ENCODE measurements at regions of chrX and their contacts with region 1.

Region 1: DNA sequence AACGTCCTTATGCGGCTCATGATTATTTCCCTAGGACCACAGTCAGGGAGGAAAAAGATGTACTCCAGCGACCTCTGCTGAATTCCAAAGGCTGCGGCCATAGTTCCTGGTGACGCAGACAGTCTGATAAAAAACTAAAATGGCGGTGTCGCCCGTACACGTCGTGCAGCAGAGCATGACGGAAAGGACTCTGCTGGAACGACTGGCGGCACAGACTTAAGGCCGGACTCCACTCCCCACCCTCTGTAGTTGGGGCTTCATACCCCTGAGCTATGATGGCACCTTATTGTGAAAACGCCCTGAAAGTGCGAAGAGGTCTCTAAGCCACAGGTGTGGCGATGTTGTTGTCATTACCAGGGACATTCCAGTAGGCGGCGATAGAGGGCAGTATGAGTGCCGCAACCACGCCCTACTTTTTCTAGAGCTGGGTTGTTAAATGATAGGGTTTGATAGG is 90.0 kb upstream of the EDA2R start:
- DNase-seq: peak; percentile 52
- H3K4me3 ChIP-seq: peak overlapping the region; percentile 29
- H3K27ac ChIP-seq: no peak overlapping the region
- H3K4me1 ChIP-seq: no peaks in the 10 kb centered on the region
- H3K27me3 ChIP-seq: no peaks in the 10 kb centered on the region
- CTCF ChIP-seq: peak; percentile 76

Region 2: DNA sequence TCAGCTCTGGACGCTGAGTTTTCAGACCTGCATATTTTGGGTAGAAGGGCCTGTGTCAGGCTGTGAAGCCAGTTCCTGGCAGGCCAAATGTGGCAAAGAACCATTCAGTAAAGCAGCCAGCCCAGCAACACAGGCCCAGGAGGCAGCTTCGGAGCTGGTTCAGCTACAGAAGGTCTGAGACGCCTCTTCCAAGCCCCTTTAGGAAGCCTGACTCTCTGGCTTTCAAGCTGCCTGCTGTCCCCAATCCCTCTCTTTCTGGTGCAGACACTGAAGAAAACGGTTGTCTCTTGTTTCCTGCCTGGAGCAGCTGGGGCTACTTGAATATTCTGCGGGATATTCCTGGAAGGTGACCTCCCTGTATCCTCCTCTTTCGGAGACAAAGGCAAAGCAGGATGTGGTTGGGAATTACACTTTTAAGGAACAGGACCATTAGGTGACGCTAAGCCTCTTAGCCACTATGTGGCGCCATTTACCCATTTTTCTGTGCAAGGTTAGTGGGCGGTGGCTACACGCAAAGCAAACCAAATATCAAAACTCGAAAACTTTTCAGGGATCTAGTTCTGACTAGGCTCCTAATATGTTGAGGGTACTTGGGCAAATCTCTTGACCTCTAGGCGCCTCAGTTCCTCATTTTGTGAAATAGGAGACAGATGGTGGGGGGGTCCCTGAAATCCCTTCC is 1147.0 kb before region 1 on chrX:
- CTCF ChIA-PET with region 1: interaction called, 6 read pairs
- POLR2A ChIA-PET with region 1: no interaction called
- intact Hi-C with region 1: loop called (anchors 2 kb)
- DNase-seq: peak; percentile 78
- H3K4me3 ChIP-seq: no peak overlapping the region
- H3K27ac ChIP-seq: no peak overlapping the region
- H3K4me1 ChIP-seq: no peaks in the 10 kb centered on the region
- H3K27me3 ChIP-seq: no peaks in the 10 kb centered on the region
- CTCF ChIP-seq: peak; percentile 86

Region 3: DNA sequence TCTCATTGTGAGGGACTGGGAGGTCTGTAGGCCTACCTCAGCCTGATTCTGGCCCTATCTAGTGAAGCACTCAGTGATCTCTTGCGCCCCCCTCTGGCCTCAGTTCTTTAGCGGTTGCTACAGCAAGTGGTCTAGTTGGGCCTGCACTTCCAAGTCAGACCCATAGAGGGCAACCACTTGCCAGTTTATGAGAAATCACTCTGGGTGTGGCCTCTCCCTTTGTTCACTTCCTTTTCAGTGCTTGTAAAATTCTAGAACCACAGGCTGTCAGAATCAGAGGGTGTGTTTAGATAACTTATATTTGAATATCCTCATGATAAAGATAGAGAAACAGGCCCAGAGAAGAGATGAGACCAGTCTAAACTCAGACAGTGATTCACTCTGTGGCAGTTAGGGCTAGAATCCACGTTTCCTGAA is 1133.4 kb before region 1 on chrX:
- CTCF ChIA-PET with region 1: no interaction called
- POLR2A ChIA-PET with region 1: no interaction called
- intact Hi-C with region 1: loop called (anchors 5 kb)
- DNase-seq: peak; percentile 95
- H3K4me3 ChIP-seq: no peak overlapping the region
- H3K27ac ChIP-seq: peak overlapping the region; percentile 31
- H3K4me1 ChIP-seq: peaks cover 19% of the 10 kb centered on the region
- H3K27me3 ChIP-seq: no peaks in the 10 kb centered on the region
- CTCF ChIP-seq: peak; percentile 99

Region 4: GRCh38 chrX:66030505-66031317 is 698.1 kb before region 1 on chrX:
- CTCF ChIA-PET with region 1: no interaction called
- POLR2A ChIA-PET with region 1: no interaction called
- intact Hi-C with region 1: loop called (anchors 10 kb)
- DNase-seq: peak; percentile 39
- H3K4me3 ChIP-seq: no peak overlapping the region
- H3K27ac ChIP-seq: no peak overlapping the region
- H3K4me1 ChIP-seq: no peaks in the 10 kb centered on the region
- H3K27me3 ChIP-seq: no peaks in the 10 kb centered on the region
- CTCF ChIP-seq: peak; percentile 74

Region 5: DNA sequence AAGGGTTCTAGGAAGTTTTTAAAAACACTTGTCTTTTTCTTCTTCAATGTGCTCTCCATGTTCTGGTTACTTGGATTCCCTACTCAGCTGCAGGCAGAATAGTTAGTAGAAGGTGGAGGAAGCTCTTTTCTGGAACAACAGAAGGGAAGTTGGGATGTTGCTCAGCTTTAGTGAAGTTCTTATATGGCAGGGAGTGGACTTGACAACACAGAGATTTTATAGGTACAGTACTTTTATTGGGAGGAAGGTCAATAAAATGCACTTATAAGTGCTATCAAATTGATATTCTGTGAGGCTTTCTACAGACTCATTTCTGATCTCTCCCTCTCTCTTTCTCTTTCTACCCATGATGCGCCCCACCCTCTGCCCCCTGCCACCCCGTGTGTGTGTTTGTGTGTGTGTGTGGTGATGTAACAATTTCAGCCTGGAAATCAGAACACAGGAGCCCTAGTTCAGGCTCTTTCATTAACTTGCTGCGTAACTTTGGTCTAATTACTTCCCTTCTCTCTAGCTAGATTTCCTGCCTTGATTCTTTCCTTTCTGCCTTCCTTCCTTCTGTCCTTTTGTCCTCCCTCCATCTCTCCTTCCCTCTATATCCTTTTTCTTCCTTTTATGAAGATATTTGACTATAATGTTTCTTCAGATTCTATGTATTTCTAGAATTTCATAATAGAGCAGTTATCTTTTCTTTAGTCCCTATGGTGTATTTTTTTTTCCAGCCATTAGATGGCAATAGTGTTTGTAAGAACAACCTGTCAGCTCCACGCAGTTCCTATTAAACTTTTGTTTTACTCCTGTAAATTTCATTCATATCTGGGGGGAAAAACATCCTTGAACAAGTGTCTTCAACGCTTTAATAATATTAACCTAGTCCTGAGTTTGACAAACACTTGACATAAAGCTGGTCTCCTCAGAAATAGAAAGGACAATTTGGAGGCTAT is 527.7 kb before region 1 on chrX:
- CTCF ChIA-PET with region 1: no interaction called
- POLR2A ChIA-PET with region 1: no interaction called
- intact Hi-C with region 1: loop called (anchors 1 kb)
- DNase-seq: peak; percentile 14
- H3K4me3 ChIP-seq: no peak overlapping the region
- H3K27ac ChIP-seq: no peak overlapping the region
- H3K4me1 ChIP-seq: no peaks in the 10 kb centered on the region
- H3K27me3 ChIP-seq: no peaks in the 10 kb centered on the region
- CTCF ChIP-seq: peak; percentile 52

Region 6: GRCh38 chrX:68146054-68146453 is 1417.2 kb after region 1 on chrX:
- CTCF ChIA-PET with region 1: no interaction called
- POLR2A ChIA-PET with region 1: no interaction called
- intact Hi-C with region 1: loop called (anchors 10 kb)
- DNase-seq: peak; percentile 42
- H3K4me3 ChIP-seq: no peak overlapping the region
- H3K27ac ChIP-seq: no peak overlapping the region
- H3K4me1 ChIP-seq: no peaks in the 10 kb centered on the region
- H3K27me3 ChIP-seq: no peaks in the 10 kb centered on the region
- CTCF ChIP-seq: peak; percentile 49